IMR-90 (cell line): ENCODE measurements at regions of chr5 and their contacts with region 1.

Region 1: GRCh38 chr5:146313027-146313426 is 25.6 kb upstream of the POU4F3 start:
- DNase-seq: no peak
- ATAC-seq: no peak
- H3K4me3 ChIP-seq: no peak overlapping the region
- H3K27ac ChIP-seq: no peak overlapping the region
- H3K4me1 ChIP-seq: no peaks in the 10 kb centered on the region
- H3K27me3 ChIP-seq: peaks cover 10% of the 10 kb centered on the region
- CTCF ChIP-seq: no peak
- POLR2A ChIP-seq: no peak
- RAD21 ChIP-seq: no peak

Region 2: GRCh38 chr5:144436007-144436406 is 1877.0 kb before region 1 on chr5:
- CTCF ChIA-PET with region 1: no interaction called
- POLR2A ChIA-PET with region 1: no interaction called
- dilution Hi-C with region 1: no loop called
- in situ Hi-C with region 1: no loop called
- intact Hi-C with region 1: no loop called
- DNase-seq: no peak
- ATAC-seq: no peak
- H3K4me3 ChIP-seq: no peak overlapping the region
- H3K27ac ChIP-seq: no peak overlapping the region
- H3K4me1 ChIP-seq: no peaks in the 10 kb centered on the region
- H3K27me3 ChIP-seq: no peaks in the 10 kb centered on the region
- CTCF ChIP-seq: no peak
- POLR2A ChIP-seq: no peak
- RAD21 ChIP-seq: no peak

Region 3: DNA sequence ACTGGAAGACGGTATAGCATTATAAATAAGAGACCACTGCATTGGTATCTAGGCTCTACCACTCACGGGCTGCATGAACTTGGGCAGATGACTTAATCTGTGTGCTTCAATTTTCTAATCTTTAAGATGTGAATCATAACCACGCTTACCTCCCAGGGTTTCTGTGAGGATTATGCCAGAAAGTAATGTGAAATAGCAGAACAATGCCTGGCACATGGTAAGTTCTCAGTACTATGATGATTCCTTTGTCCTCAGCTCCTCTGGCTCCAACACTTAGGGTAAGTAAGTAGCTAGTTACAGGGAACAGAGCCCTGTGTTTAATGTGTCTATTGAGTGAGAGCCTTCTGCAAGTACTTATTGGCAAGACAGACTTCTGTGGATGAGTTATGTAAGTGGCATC is 56.7 kb after region 1 on chr5:
- CTCF ChIA-PET with region 1: no interaction called
- POLR2A ChIA-PET with region 1: no interaction called
- dilution Hi-C with region 1: no loop called
- in situ Hi-C with region 1: no loop called
- intact Hi-C with region 1: loop called (anchors 10 kb)
- DNase-seq: peak; percentile 53
- ATAC-seq: no peak
- H3K4me3 ChIP-seq: no peak overlapping the region
- H3K27ac ChIP-seq: no peak overlapping the region
- H3K4me1 ChIP-seq: no peaks in the 10 kb centered on the region
- H3K27me3 ChIP-seq: peaks cover 2% of the 10 kb centered on the region
- CTCF ChIP-seq: no peak
- POLR2A ChIP-seq: no peak
- RAD21 ChIP-seq: no peak